ENCODE measurements at regions of chr6 and their contacts with region 1.

Region 1: GRCh38 chr6:26031595-26032339 is 55.5 kb upstream of the HFE start:
- DNase-seq: peak; percentile 90
- CTCF ChIP-seq: peak; percentile 39

Region 2: GRCh38 chr6:26157977-26158648 is 126.3 kb after region 1 on chr6:
- in situ Hi-C with region 1: no loop called
- DNase-seq: peak; percentile 89
- CTCF ChIP-seq: no peak

Region 3: DNA sequence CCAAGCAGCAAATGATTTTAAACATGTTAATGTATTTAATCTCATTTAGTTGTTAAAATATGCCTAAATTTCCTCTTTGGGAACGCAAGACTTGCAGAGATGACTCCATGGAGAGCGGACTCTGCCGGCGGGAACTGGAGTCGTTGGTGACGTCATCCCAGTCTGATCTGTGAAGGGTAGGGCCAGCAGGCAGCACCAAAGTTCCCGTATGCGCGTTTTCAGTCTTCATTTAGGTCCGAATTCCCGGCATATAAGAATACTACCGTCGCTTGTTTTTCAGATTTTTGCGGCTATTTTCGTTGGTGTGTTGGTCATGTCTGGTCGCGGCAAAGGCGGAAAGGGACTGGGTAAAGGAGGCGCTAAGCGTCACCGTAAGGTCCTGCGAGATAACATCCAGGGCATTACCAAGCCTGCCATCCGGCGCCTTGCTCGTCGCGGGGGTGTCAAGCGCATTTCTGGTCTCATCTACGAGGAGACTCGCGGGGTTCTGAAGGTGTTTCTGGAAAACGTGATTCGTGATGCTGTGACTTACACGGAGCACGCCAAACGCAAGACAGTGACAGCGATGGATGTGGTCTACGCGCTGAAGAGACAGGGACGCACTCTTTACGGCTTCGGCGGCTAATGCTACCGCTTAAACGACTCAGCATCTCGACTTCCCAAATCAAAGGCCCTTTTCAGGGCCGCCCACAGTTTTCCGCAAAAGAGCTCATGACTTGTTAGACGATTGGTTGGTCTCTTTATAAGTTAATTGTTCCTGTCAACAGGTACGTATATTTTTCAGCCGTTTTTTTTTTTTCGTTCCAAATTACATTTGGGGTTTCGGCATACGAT is 172.8 kb after region 1 on chr6:
- in situ Hi-C with region 1: loop called (anchors 10 kb)
- DNase-seq: peak; percentile 83
- CTCF ChIP-seq: peak; percentile 9

Region 4: DNA sequence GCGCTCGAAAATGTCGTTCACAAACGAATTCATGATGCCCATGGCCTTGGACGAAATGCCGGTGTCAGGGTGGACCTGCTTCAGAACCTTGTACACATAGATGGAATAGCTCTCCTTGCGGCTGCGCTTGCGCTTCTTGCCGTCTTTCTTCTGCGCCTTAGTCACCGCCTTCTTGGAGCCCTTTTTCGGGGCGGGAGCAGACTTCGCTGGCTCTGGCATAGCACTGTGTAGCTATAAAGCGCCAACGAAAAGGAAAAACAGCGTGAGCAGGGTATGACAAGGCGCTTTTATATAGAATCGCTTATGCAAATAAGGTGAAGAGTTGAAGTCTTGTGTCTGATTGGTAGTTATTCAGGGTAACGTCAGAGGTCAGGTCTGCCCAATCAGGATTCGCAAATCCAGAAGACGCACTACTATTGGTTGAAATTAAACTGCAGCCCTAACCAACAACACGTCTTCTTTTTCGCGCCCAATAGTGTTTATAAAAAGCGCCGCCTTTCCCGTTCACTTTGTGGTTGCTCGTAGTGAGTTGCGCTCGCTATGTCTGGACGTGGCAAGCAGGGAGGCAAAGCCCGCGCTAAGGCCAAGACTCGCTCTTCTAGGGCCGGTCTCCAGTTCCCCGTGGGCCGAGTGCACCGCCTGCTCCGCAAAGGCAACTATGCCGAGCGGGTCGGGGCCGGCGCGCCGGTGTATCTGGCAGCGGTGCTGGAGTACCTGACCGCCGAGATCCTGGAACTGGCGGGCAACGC is 1100.9 kb after region 1 on chr6:
- in situ Hi-C with region 1: loop called (anchors 10 kb)
- DNase-seq: peak; percentile 94
- CTCF ChIP-seq: no peak

Region 5: GRCh38 chr6:27838058-27838944 is 1806.5 kb after region 1 on chr6:
- in situ Hi-C with region 1: loop called (anchors 10 kb)
- DNase-seq: peak; percentile 92
- CTCF ChIP-seq: no peak

Measured in GM13976 (cell line).